ENCODE measurements at regions of chr9 and their contacts with region 1.

Region 1: GRCh38 chr9:19629488-19629887 is 159.3 kb downstream of the SLC24A2 start:
- DNase-seq: no peak
- H3K4me3 ChIP-seq: no peak overlapping the region
- H3K27ac ChIP-seq: no peak overlapping the region
- H3K4me1 ChIP-seq: peaks cover 0 to 3% (median 0%) of the 10 kb centered on the region in 4 experiments; a peak in 1 of 7 replicates
- H3K27me3 ChIP-seq: no peaks in the 10 kb centered on the region
- CTCF ChIP-seq: peak; percentile 14 to 35 (median 32); a peak in 3 of 4 replicates
- EP300 ChIP-seq: no peak
- POLR2A ChIP-seq: no peak
- RAD21 ChIP-seq: peak in 1 of 2 experiments; percentile 35; a peak in 1 of 4 replicates

Region 2: DNA sequence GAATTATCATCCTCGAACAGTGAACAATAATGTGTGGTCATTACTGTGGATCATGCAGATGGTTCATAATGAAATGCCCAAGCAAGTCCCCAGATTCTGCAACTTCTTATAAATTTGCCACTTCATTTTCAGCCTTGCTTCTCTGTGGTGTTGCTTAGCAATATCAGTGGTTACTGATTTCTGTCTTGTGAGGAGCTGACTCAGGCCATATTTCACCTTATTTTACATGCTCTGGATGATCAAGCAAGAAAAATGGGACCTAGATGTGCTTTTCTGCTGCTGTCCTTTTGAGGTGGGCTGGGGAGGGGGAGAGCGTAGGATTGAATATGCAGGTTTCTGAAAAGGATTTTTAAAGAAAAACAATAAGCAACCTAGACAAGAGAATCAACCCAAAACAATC is 28.9 kb before region 1 on chr9:
- CTCF ChIA-PET with region 1: interaction called, 17 read pairs
- POLR2A ChIA-PET with region 1: no interaction called
- DNase-seq: no peak
- H3K4me3 ChIP-seq: no peak overlapping the region
- H3K27ac ChIP-seq: no peak overlapping the region
- H3K4me1 ChIP-seq: no peaks in the 10 kb centered on the region
- H3K27me3 ChIP-seq: no peaks in the 10 kb centered on the region
- CTCF ChIP-seq: no peak
- EP300 ChIP-seq: no peak
- POLR2A ChIP-seq: no peak
- RAD21 ChIP-seq: no peak

Region 3: DNA sequence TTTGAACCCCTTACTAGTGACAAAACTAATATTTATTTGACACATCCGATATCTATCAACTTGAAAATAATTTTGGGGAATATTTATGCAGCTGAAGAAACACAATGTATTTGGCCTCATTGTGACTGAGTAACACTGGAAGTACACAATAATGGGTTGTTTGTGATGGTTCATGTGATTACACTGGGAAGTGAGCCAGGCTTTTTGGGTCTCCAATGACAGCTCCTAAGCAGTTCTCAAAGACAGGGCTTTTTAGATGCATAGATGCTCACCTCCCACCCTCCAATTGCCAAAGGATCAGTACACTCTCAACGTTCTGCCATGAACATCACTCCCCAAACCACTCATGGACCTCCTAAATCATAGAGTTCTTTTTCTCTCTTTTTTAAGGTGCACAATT is 10.7 kb before region 1 on chr9:
- CTCF ChIA-PET with region 1: interaction called, 22 read pairs
- POLR2A ChIA-PET with region 1: no interaction called
- DNase-seq: no peak
- H3K4me3 ChIP-seq: no peak overlapping the region
- H3K27ac ChIP-seq: no peak overlapping the region
- H3K4me1 ChIP-seq: no peaks in the 10 kb centered on the region
- H3K27me3 ChIP-seq: no peaks in the 10 kb centered on the region
- CTCF ChIP-seq: no peak
- EP300 ChIP-seq: no peak
- POLR2A ChIP-seq: no peak
- RAD21 ChIP-seq: no peak

Region 4: GRCh38 chr9:19641046-19641445 is 11.6 kb after region 1 on chr9:
- CTCF ChIA-PET with region 1: interaction called, 64 read pairs
- POLR2A ChIA-PET with region 1: no interaction called
- DNase-seq: no peak
- H3K4me3 ChIP-seq: no peak overlapping the region
- H3K27ac ChIP-seq: no peak overlapping the region
- H3K4me1 ChIP-seq: no peaks in the 10 kb centered on the region
- H3K27me3 ChIP-seq: no peaks in the 10 kb centered on the region
- CTCF ChIP-seq: peak in 2 of 3 experiments; percentile 40 to 42; a peak in 3 of 4 replicates
- EP300 ChIP-seq: no peak
- POLR2A ChIP-seq: no peak
- RAD21 ChIP-seq: peak; percentile 56 to 63

Region 5: GRCh38 chr9:19946441-19947109 is 317.1 kb after region 1 on chr9:
- CTCF ChIA-PET with region 1: no interaction called
- POLR2A ChIA-PET with region 1: no interaction called
- DNase-seq: no peak
- H3K4me3 ChIP-seq: no peak overlapping the region
- H3K27ac ChIP-seq: no peak overlapping the region
- H3K4me1 ChIP-seq: peaks cover 0 to 5% (median 0%) of the 10 kb centered on the region in 4 experiments; a peak in 1 of 7 replicates
- H3K27me3 ChIP-seq: no peaks in the 10 kb centered on the region
- CTCF ChIP-seq: peak; percentile 37 to 69 (median 48); a peak in 3 of 4 replicates
- EP300 ChIP-seq: no peak
- POLR2A ChIP-seq: no peak
- RAD21 ChIP-seq: peak; percentile 74 to 82